Prostate gland (tissue), 2 donors: ENCODE measurements at regions of chr6 and their contacts with region 1.

Region 1: GRCh38 chr6:34386316-34387137 is 5.9 kb downstream of the NUDT3 start:
- DNase-seq: no peak
- H3K4me3 ChIP-seq: no peak overlapping the region
- H3K27ac ChIP-seq: no peak overlapping the region
- H3K4me1 ChIP-seq: no peaks in the 10 kb centered on the region
- H3K27me3 ChIP-seq: no peaks in the 10 kb centered on the region
- CTCF ChIP-seq: no peak
- POLR2A ChIP-seq: no peak

Region 2: DNA sequence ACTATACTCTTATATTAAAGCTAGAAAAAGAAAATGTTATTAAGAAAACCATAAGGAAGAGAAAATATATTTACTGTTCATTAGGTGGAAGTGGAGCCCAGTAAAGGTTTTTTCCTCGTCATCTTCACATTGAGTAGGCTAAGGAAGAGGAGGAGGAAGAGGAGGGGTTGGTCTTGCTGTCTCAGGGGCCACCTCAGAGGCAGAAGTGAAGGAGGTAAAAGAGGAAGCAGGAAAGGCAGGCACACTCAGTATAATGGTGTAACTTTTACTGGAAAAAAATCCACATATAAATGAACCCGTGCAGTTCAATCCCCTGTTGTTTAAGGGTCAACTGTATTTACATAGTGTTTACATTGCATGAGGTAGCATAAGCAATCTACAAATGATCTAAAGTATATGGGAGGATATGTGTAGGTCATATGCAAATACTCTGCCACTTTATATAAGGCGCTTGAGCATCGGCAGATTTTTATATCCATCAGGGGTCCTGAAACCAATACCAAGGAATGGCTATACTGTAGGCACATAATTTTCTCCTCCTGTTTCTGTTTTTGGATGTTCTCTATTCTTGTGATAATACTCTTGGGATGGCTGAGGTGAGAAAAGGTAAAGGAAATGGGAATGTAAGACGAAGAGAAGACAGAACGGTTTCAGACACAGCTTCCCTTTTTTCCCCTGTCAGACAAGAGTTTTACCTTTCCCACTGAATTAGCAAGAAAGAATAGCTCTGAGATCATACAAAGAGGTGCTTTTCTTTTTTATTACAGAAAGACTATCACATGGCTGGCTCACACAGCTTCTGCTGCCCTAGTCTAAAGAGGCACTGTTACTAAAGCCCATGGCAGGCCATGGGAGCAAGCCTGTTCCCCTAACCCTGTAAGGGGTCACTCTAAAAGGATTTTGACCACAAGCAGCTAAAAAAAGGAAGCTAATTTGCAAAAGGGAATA is 54.0 kb before region 1 on chr6:
- intact Hi-C with region 1: loop called (anchors 10 kb)
- DNase-seq: no peak
- H3K4me3 ChIP-seq: no peak overlapping the region
- H3K27ac ChIP-seq: no peak overlapping the region
- H3K4me1 ChIP-seq: no peaks in the 10 kb centered on the region
- H3K27me3 ChIP-seq: no peaks in the 10 kb centered on the region
- CTCF ChIP-seq: no peak
- POLR2A ChIP-seq: no peak

Region 3: GRCh38 chr6:34350137-34350933 is 36.2 kb before region 1 on chr6:
- intact Hi-C with region 1: no loop called
- DNase-seq: no peak
- H3K4me3 ChIP-seq: no peak overlapping the region
- H3K27ac ChIP-seq: no peak overlapping the region
- H3K4me1 ChIP-seq: no peaks in the 10 kb centered on the region
- H3K27me3 ChIP-seq: no peaks in the 10 kb centered on the region
- CTCF ChIP-seq: no peak
- POLR2A ChIP-seq: no peak

Region 4: DNA sequence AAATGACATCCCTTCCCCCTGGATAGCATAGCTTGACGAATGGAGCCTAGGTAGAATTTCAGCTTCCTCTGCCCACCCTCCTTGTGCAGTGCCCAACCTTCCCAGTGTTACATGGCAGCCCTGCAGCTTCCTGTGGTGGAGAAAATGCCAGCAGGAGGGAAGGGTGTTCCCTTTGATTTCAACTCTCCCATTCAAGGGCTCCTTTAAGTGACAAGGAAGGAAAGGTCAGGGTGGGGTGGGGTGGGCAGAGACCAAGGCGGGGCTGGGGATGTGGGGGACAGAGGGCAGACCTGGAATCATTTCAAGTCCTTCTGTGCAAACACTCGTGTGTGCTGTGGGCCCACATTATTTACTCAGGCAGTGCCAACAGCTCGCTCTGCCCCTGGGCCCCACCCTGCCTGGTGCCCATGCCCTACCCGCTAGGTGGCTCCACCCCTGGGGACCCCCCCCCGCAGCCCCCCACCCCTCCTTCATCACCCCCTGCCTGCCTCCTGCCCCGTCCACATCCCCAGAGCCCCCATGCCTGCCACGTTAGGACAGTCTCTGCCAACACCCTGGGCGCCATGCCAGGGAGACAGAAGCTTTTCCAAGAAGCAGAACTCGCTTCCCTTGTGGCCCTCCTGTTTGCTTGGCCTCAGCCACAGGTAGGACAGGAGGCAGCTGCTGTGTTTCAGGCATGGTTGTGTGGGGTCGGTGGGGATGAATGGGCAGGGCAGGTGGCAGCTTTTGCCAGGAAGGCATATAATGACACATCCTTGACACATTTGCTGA is 160.2 kb after region 1 on chr6:
- intact Hi-C with region 1: no loop called
- DNase-seq: peak; percentile 82
- H3K4me3 ChIP-seq: no peak overlapping the region
- H3K27ac ChIP-seq: peak overlapping the region; percentile 86 to 90
- H3K4me1 ChIP-seq: peaks cover 44% of the 10 kb centered on the region
- H3K27me3 ChIP-seq: no peaks in the 10 kb centered on the region
- CTCF ChIP-seq: peak in 2 of 4 experiments; percentile 13 to 29
- POLR2A ChIP-seq: no peak